Motor neuron (in vitro differentiated cells): ENCODE measurements at regions of chr9 and their contacts with region 1.

Region 1: GRCh38 chr9:93682232-93682968 is 106.0 kb downstream of the PHF2 start:
- ATAC-seq: peak; percentile 46 to 93 (median 69)
- H3K4me3 ChIP-seq: no peak overlapping the region
- H3K27ac ChIP-seq: no peak overlapping the region
- H3K4me1 ChIP-seq: no peaks in the 10 kb centered on the region

Region 2: GRCh38 chr9:93962561-93963440 is 280.4 kb after region 1 on chr9:
- in situ Hi-C with region 1: loop called in 6 of 9 experiments (anchors 10 to 25 kb)
- ATAC-seq: peak; percentile 69 to 88 (median 84)
- H3K4me3 ChIP-seq: no peak overlapping the region
- H3K27ac ChIP-seq: no peak overlapping the region
- H3K4me1 ChIP-seq: peaks cover 5 to 11% of the 10 kb centered on the region in 2 donors